ENCODE measurements at regions of chr9 and their contacts with region 1.

Region 1: DNA sequence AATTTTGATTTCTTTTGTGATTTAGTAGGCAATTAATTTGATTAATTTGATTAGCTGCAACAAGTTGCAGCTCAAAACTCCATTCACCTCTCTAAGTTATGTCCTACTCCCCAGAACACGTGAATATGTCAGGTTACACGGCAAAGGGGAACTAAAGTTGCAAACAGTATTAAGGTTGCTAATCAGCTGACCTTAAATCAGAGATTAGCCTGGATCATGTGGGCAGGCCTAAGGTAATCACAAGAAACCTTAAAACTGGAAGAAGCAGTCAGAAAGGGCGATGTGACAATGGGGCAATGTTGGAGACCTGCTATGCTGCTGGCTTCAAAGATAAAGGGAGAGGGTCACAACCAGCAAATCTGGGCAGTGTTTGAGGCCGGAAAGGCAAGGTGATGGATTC is 47.3 kb upstream of the ANXA1 start:
- DNase-seq: no peak
- ATAC-seq: no peak
- H3K4me3 Mint-ChIP-seq: no peak overlapping the region
- H3K27ac Mint-ChIP-seq: no peak overlapping the region
- H3K4me1 Mint-ChIP-seq: no peaks in the 10 kb centered on the region
- H3K27me3 Mint-ChIP-seq: peaks cover 3% of the 10 kb centered on the region

Region 2: DNA sequence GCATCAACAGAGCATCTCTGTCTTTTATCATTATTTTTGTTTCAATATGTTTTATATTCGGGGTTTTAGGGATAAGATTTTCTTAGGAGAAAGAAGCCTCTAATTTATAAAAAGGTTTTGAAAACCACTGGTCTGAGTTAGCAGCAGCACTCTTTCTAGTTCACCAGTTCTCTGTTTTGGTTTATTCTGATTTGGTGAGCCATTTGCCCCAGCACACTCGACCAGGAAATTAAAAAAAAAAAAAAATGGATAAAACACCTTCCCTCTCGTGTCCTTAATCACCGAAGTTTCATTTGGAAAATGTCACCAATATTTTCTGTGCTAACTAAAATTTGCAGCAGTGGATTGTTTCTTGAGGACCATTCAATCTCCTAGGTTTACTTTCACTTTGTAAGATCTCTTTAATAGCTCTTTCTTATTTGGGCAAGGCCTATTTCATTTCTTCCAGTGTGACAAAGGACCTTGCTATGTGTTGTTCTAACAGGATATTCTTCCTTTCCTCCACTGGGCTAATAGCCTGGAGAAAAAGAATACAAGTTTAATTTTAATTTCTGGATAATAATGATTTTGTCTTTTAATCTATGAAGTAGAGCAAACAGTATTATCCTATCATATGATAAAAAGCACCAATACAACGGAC is 10.5 kb before region 1 on chr9:
- CTCF ChIA-PET with region 1: interaction called, 10 read pairs
- POLR2A ChIA-PET with region 1: interaction called, 5 read pairs
- intact Hi-C with region 1: no loop called
- DNase-seq: no peak
- ATAC-seq: no peak
- H3K4me3 Mint-ChIP-seq: no peak overlapping the region
- H3K27ac Mint-ChIP-seq: no peak overlapping the region
- H3K4me1 Mint-ChIP-seq: peaks cover 2% of the 10 kb centered on the region
- H3K27me3 Mint-ChIP-seq: no peaks in the 10 kb centered on the region

Region 3: GRCh38 chr9:73173557-73174329 is 69.4 kb after region 1 on chr9:
- CTCF ChIA-PET with region 1: interaction called, 125 read pairs
- POLR2A ChIA-PET with region 1: no interaction called
- intact Hi-C with region 1: no loop called
- DNase-seq: no peak
- ATAC-seq: no peak
- H3K4me3 Mint-ChIP-seq: no peak overlapping the region
- H3K27ac Mint-ChIP-seq: no peak overlapping the region
- H3K4me1 Mint-ChIP-seq: peaks cover 10% of the 10 kb centered on the region
- H3K27me3 Mint-ChIP-seq: no peaks in the 10 kb centered on the region

Region 4: GRCh38 chr9:73223594-73223993 is 119.3 kb after region 1 on chr9:
- CTCF ChIA-PET with region 1: no interaction called
- POLR2A ChIA-PET with region 1: no interaction called
- intact Hi-C with region 1: no loop called
- DNase-seq: no peak
- ATAC-seq: no peak
- H3K4me3 Mint-ChIP-seq: no peak overlapping the region
- H3K27ac Mint-ChIP-seq: no peak overlapping the region
- H3K4me1 Mint-ChIP-seq: peaks cover 19% of the 10 kb centered on the region
- H3K27me3 Mint-ChIP-seq: peaks cover 34% of the 10 kb centered on the region